Endothelial cell of umbilical vein (primary cell): ENCODE measurements at regions of chr6 and their contacts with region 1.

Region 1: DNA sequence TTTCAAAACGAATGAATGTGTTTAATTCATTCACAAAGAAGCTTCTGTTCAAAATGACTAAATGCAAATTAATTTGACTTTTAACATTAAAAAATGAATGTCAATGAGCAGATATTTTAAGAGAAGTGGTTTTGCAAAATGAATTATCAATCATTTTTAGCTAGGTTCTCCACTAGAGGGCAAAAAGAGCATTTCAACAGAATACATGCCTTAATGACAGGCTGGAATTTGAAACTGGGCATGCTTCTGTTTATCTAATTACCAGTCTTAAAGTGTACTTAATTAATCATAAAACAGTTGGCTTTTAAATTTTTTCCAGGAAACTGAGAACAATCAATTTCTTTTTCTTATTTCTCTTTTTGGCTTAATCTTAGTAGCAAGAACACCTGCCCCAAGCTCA is 63.8 kb upstream of the TINAG start:
- DNase-seq: peak; percentile 59
- H3K4me3 ChIP-seq: no peak overlapping the region
- H3K27ac ChIP-seq: no peak overlapping the region
- H3K4me1 ChIP-seq: no peaks in the 10 kb centered on the region
- H3K27me3 ChIP-seq: no peaks in the 10 kb centered on the region
- CTCF ChIP-seq: peak; percentile 40 to 41
- POLR2A ChIP-seq: no peak

Region 2: GRCh38 chr6:54112151-54112650 is 132.2 kb before region 1 on chr6:
- CTCF ChIA-PET with region 1: interaction called, 19 read pairs
- POLR2A ChIA-PET with region 1: no interaction called
- dilution Hi-C with region 1: no loop called
- intact Hi-C with region 1: loop called (anchors 5 kb)
- DNase-seq: peak; percentile 91
- H3K4me3 ChIP-seq: peak overlapping the region in 1 of 3 experiments; percentile 28
- H3K27ac ChIP-seq: peak overlapping the region; percentile 89
- H3K4me1 ChIP-seq: peaks cover 38% of the 10 kb centered on the region
- H3K27me3 ChIP-seq: no peaks in the 10 kb centered on the region
- CTCF ChIP-seq: no peak
- POLR2A ChIP-seq: peak; percentile 56

Region 3: GRCh38 chr6:54255886-54256285 is 11.5 kb after region 1 on chr6:
- CTCF ChIA-PET with region 1: interaction called, 13 read pairs
- POLR2A ChIA-PET with region 1: no interaction called
- dilution Hi-C with region 1: no loop called
- intact Hi-C with region 1: no loop called
- DNase-seq: peak; percentile 66
- H3K4me3 ChIP-seq: no peak overlapping the region
- H3K27ac ChIP-seq: no peak overlapping the region
- H3K4me1 ChIP-seq: peaks cover 5% of the 10 kb centered on the region
- H3K27me3 ChIP-seq: no peaks in the 10 kb centered on the region
- CTCF ChIP-seq: no peak
- POLR2A ChIP-seq: no peak

Region 4: DNA sequence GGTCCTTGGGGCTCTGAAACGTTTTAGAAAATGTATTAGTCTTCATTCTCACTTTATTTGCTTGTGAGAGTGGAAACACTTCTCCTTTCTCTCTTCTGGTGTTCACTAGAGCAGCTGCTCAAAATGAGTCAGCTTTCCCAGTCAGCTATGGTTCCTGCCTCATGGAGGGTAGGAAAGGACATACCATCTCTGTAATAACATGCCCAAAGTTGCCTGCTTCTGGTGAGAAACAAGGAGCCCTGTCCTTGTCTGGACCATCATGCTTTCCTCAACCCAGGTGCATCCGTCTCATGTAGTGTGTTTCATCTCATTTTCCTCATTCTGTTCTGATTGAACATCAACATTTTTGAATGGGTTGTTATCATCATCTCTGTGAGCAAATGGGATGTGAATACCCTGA is 46.7 kb after region 1 on chr6:
- CTCF ChIA-PET with region 1: no interaction called
- POLR2A ChIA-PET with region 1: no interaction called
- dilution Hi-C with region 1: no loop called
- intact Hi-C with region 1: loop called (anchors 2 kb)
- DNase-seq: peak; percentile 94
- H3K4me3 ChIP-seq: no peak overlapping the region
- H3K27ac ChIP-seq: peak overlapping the region; percentile 95
- H3K4me1 ChIP-seq: peaks cover 33% of the 10 kb centered on the region
- H3K27me3 ChIP-seq: no peaks in the 10 kb centered on the region
- CTCF ChIP-seq: no peak
- POLR2A ChIP-seq: peak; percentile 22

Region 5: DNA sequence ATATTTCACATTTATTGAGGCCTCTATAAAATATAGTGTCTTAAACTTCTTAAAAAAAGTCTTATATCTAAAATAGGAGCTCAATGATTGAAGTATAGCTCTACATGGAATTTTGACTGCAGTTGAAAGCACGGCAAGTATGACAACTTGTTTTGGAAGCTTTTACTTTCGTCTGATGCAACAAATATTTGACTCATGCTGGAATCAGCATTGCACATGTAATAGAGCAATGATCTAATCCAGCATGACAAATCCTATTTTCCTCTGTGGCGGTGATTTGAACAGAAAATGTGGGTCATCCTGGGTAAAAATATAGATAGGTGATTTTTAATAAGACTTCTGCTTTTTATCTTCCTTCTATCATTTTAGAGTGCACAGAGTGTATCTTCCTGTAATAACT is 175.5 kb after region 1 on chr6:
- CTCF ChIA-PET with region 1: interaction called, 10 read pairs
- POLR2A ChIA-PET with region 1: no interaction called
- dilution Hi-C with region 1: no loop called
- intact Hi-C with region 1: no loop called
- DNase-seq: peak; percentile 60
- H3K4me3 ChIP-seq: no peak overlapping the region
- H3K27ac ChIP-seq: peak overlapping the region; percentile 43
- H3K4me1 ChIP-seq: peaks cover 10% of the 10 kb centered on the region
- H3K27me3 ChIP-seq: no peaks in the 10 kb centered on the region
- CTCF ChIP-seq: no peak
- POLR2A ChIP-seq: no peak

Region 6: GRCh38 chr6:55069132-55069781 is 824.8 kb after region 1 on chr6:
- CTCF ChIA-PET with region 1: interaction called, 9 read pairs
- POLR2A ChIA-PET with region 1: no interaction called
- dilution Hi-C with region 1: no loop called
- intact Hi-C with region 1: loop called (anchors 10 kb)
- DNase-seq: peak; percentile 60
- H3K4me3 ChIP-seq: no peak overlapping the region
- H3K27ac ChIP-seq: no peak overlapping the region
- H3K4me1 ChIP-seq: no peaks in the 10 kb centered on the region
- H3K27me3 ChIP-seq: no peaks in the 10 kb centered on the region
- CTCF ChIP-seq: peak; percentile 35 to 46
- POLR2A ChIP-seq: no peak